ENCODE measurements at regions of chr15 and their contacts with region 1.

Region 1: GRCh38 chr15:88878720-88879184 is 16.6 kb downstream of the HAPLN3 start:
- DNase-seq: peak; percentile 68 to 87
- ATAC-seq: peak; percentile 91 to 95
- H3K4me3 ChIP-seq: no peak overlapping the region
- H3K27ac ChIP-seq: no peak overlapping the region
- H3K4me1 ChIP-seq: no peaks in the 10 kb centered on the region
- CTCF ChIP-seq: peak; percentile 78
- EP300 ChIP-seq: no peak
- POLR2A ChIP-seq: no peak
- RAD21 ChIP-seq: peak; percentile 70 to 82

Region 2: DNA sequence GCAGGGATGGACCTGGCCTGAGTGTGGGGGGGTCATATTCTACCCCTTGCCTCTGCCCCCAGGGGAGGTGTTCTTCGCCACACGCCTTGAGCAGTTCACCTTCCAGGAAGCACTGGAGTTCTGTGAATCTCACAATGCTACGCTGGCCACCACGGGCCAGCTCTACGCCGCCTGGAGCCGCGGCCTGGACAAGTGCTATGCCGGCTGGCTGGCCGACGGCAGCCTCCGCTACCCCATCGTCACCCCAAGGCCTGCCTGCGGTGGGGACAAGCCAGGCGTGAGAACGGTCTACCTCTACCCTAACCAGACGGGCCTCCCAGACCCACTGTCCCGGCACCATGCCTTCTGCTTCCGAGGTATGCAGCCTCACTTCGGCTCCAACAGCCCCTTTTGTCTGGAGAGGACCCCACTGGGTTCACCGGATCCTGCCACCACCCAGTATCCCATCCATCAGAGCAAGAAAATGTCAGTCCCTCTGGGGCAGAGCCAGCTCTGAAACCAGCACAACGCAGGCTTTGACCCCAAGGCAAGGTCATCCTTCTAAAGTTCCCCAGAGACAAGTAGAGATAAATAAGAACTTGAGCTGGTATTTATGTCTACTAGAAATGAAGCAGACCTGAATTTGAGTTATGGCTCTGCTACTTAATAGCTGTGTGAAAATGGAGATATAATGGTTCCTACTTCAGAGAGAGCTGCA is 29.2 kb before region 1 on chr15:
- CTCF ChIA-PET with region 1: interaction called, 14 read pairs
- POLR2A ChIA-PET with region 1: no interaction called
- DNase-seq: no peak
- ATAC-seq: no peak
- H3K4me3 ChIP-seq: no peak overlapping the region
- H3K27ac ChIP-seq: no peak overlapping the region
- H3K4me1 ChIP-seq: no peaks in the 10 kb centered on the region
- CTCF ChIP-seq: no peak
- EP300 ChIP-seq: no peak
- POLR2A ChIP-seq: no peak
- RAD21 ChIP-seq: no peak

Region 3: DNA sequence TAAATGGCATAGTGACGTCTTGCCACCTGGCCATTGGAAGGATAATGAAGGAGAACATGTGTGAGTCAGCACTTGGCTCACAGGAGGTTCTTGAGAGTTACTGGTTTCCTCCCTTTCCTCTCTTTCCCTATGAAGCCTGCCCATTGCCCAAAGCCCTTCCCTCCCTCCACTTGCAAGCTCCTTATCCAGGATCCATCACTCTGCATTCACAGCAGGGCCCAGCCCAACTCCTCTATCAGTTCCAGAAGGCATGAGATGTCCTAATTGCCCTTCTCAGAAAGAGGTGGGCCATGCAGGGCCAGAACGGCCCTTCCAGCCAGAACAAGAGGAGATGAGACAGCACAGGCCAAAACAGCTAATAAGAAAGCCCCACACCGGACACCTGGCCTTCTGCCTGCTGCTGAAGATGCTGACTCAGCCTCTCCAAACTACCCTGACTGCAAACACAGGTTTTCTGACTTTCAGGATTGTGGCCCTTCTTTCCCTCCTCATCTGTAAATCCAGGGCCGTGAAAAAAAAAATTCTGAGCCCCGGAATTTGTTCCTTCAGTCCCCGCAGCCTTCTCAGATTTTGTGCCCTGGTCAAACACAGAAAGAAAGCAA is 13.2 kb before region 1 on chr15:
- CTCF ChIA-PET with region 1: interaction called, 71 read pairs
- POLR2A ChIA-PET with region 1: no interaction called
- DNase-seq: no peak
- ATAC-seq: no peak
- H3K4me3 ChIP-seq: no peak overlapping the region
- H3K27ac ChIP-seq: no peak overlapping the region
- H3K4me1 ChIP-seq: no peaks in the 10 kb centered on the region
- CTCF ChIP-seq: no peak
- EP300 ChIP-seq: no peak
- POLR2A ChIP-seq: no peak
- RAD21 ChIP-seq: no peak

Region 4: DNA sequence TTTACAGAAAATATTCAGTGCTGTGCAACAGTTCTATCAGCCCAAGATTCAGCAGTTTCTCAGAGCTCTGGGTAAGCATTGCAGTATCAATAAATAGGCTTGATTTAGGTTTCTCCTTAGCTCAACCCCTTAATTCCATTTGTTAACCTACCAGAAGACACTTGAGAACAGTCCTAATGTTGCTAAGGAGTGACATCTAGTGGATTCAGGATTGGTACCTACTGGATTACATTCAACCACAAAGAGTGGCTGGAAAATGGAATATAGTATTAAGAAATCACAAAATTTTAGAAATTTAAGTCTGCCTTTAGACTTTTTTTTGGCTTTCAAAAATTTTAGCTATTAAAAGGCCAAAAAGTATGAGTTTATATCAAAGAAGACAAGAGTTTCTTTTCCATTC is 421.1 kb after region 1 on chr15:
- CTCF ChIA-PET with region 1: interaction called, 11 read pairs
- POLR2A ChIA-PET with region 1: no interaction called
- DNase-seq: peak in 1 of 2 experiments; percentile 38
- ATAC-seq: peak; percentile 80 to 87
- H3K4me3 ChIP-seq: no peak overlapping the region
- H3K27ac ChIP-seq: no peak overlapping the region
- H3K4me1 ChIP-seq: no peaks in the 10 kb centered on the region
- CTCF ChIP-seq: peak; percentile 56
- EP300 ChIP-seq: no peak
- POLR2A ChIP-seq: no peak
- RAD21 ChIP-seq: peak; percentile 48 to 60

Measured in A549 (cell line).